SK-N-SH (cell line): ENCODE measurements at regions of chr5 and their contacts with region 1.

Region 1: GRCh38 chr5:137344723-137345322 is 154.3 kb downstream of the SPOCK1 start:
- DNase-seq: peak; percentile 28
- H3K4me3 ChIP-seq: peak overlapping the region in 1 of 2 experiments; percentile 18; a peak in 1 of 4 replicates
- H3K27ac ChIP-seq: no peak overlapping the region
- H3K4me1 ChIP-seq: peaks cover 12 to 14% of the 10 kb centered on the region in 2 experiments; a peak in 3 of 4 replicates
- H3K27me3 ChIP-seq: no peaks in the 10 kb centered on the region
- CTCF ChIP-seq: peak; percentile 81
- EP300 ChIP-seq: no peak
- RAD21 ChIP-seq: peak; percentile 80

Region 2: DNA sequence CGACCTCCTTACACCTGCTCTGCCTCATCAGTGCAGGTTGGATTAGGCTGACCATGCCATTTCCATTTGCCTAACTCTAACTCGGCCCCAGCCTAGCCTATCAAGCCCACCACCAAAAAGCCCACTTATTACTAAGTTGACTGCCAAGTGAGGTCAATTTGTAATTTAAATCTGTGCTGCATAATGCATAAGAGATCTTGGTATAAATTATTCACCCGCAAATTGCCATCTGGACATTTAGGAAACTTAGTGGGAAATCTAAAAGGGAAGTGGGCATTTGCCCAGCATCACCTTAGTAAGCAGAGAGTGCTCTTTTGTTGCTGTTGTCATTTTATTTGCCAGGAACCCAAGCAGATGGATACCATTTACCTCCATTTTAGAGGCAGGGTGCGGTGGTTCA is 11.3 kb after region 1 on chr5:
- CTCF ChIA-PET with region 1: interaction called, 13 read pairs
- POLR2A ChIA-PET with region 1: no interaction called
- DNase-seq: no peak
- H3K4me3 ChIP-seq: no peak overlapping the region
- H3K27ac ChIP-seq: no peak overlapping the region
- H3K4me1 ChIP-seq: peaks cover 2 to 14% of the 10 kb centered on the region in 2 experiments; a peak in 2 of 4 replicates
- H3K27me3 ChIP-seq: no peaks in the 10 kb centered on the region
- CTCF ChIP-seq: no peak
- EP300 ChIP-seq: no peak
- RAD21 ChIP-seq: no peak

Region 3: DNA sequence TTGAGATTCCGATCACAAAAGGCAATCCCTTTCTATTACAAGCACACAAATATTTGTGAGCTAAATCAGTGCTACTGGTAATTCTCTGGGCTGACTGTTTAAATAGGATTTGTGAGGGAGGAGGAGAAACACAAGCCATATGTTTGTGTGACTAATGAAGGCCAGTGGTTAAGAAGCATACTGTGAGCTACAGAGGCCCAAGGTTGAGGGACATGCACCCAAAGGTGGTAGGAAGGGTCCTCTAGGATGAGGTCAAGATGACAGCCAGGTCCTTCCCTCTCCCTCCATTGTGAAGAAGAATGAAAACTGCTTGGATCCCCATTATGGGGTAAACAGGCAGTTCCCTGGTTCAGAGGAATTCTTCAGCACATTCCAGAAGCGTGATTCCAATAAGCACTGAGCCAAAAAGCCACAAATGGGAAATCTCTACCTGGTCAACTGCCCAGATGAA is 70.4 kb after region 1 on chr5:
- CTCF ChIA-PET with region 1: interaction called, 11 read pairs
- POLR2A ChIA-PET with region 1: no interaction called
- DNase-seq: no peak
- H3K4me3 ChIP-seq: no peak overlapping the region
- H3K27ac ChIP-seq: peak overlapping the region; percentile 21 to 86; a peak in 3 of 4 replicates
- H3K4me1 ChIP-seq: peaks cover 4 to 36% of the 10 kb centered on the region in 2 experiments; a peak in 3 of 4 replicates
- H3K27me3 ChIP-seq: no peaks in the 10 kb centered on the region
- CTCF ChIP-seq: no peak
- EP300 ChIP-seq: no peak
- RAD21 ChIP-seq: no peak

Region 4: GRCh38 chr5:137708796-137709559 is 364.2 kb after region 1 on chr5:
- CTCF ChIA-PET with region 1: no interaction called
- POLR2A ChIA-PET with region 1: no interaction called
- DNase-seq: no peak
- H3K4me3 ChIP-seq: no peak overlapping the region
- H3K27ac ChIP-seq: no peak overlapping the region
- H3K4me1 ChIP-seq: no peaks in the 10 kb centered on the region; a peak in 1 of 4 replicates
- H3K27me3 ChIP-seq: no peaks in the 10 kb centered on the region
- CTCF ChIP-seq: no peak
- EP300 ChIP-seq: no peak
- RAD21 ChIP-seq: no peak